MCF 10A (cell line): ENCODE measurements at regions of chr2 and their contacts with region 1.

Region 1: GRCh38 chr2:218607436-218608115 is at the start of gene PLCD4:
- DNase-seq: peak; percentile 79
- H3K4me3 Mint-ChIP-seq: peak within 1 kb of the TSS; percentile 36
- H3K27ac Mint-ChIP-seq: peak within 1 kb of the TSS; percentile 92
- H3K4me1 Mint-ChIP-seq: peaks cover 32% of the 10 kb centered on the region
- H3K27me3 Mint-ChIP-seq: no peaks in the 10 kb centered on the region
- CTCF ChIP-seq: no peak
- total RNA-seq, gene PLCD4: 0.40 and 0.86 TPM in 2 replicates

Region 2: GRCh38 chr2:218485986-218486667 is 121.4 kb before region 1 on chr2:
- CTCF ChIA-PET with region 1: no interaction called
- POLR2A ChIA-PET with region 1: no interaction called
- intact Hi-C with region 1: no loop called
- DNase-seq: no peak
- H3K4me3 Mint-ChIP-seq: no peak overlapping the region
- H3K27ac Mint-ChIP-seq: no peak overlapping the region
- H3K4me1 Mint-ChIP-seq: no peaks in the 10 kb centered on the region
- H3K27me3 Mint-ChIP-seq: no peaks in the 10 kb centered on the region
- CTCF ChIP-seq: no peak

Region 3: GRCh38 chr2:218540015-218540414 is 67.6 kb before region 1 on chr2:
- CTCF ChIA-PET with region 1: no interaction called
- POLR2A ChIA-PET with region 1: no interaction called
- intact Hi-C with region 1: no loop called
- DNase-seq: no peak
- H3K4me3 Mint-ChIP-seq: no peak overlapping the region
- H3K27ac Mint-ChIP-seq: no peak overlapping the region
- H3K4me1 Mint-ChIP-seq: no peaks in the 10 kb centered on the region
- H3K27me3 Mint-ChIP-seq: no peaks in the 10 kb centered on the region
- CTCF ChIP-seq: no peak

Region 4: GRCh38 chr2:218618102-218618860 is 10.7 kb after region 1 on chr2:
- CTCF ChIA-PET with region 1: interaction called, 6 read pairs
- POLR2A ChIA-PET with region 1: interaction called, 11 read pairs
- intact Hi-C with region 1: no loop called
- DNase-seq: peak; percentile 31
- H3K4me3 Mint-ChIP-seq: no peak overlapping the region
- H3K27ac Mint-ChIP-seq: no peak overlapping the region
- H3K4me1 Mint-ChIP-seq: no peaks in the 10 kb centered on the region
- H3K27me3 Mint-ChIP-seq: no peaks in the 10 kb centered on the region
- CTCF ChIP-seq: no peak

Region 5: GRCh38 chr2:218648088-218648786 is 40.7 kb after region 1 on chr2:
- CTCF ChIA-PET with region 1: interaction called, 10 read pairs
- POLR2A ChIA-PET with region 1: interaction called, 5 read pairs
- intact Hi-C with region 1: no loop called
- DNase-seq: peak; percentile 68
- H3K4me3 Mint-ChIP-seq: no peak overlapping the region
- H3K27ac Mint-ChIP-seq: no peak overlapping the region
- H3K4me1 Mint-ChIP-seq: no peaks in the 10 kb centered on the region
- H3K27me3 Mint-ChIP-seq: no peaks in the 10 kb centered on the region
- CTCF ChIP-seq: peak; percentile 67